ENCODE measurements at regions of chr4 and their contacts with region 1.

Region 1: DNA sequence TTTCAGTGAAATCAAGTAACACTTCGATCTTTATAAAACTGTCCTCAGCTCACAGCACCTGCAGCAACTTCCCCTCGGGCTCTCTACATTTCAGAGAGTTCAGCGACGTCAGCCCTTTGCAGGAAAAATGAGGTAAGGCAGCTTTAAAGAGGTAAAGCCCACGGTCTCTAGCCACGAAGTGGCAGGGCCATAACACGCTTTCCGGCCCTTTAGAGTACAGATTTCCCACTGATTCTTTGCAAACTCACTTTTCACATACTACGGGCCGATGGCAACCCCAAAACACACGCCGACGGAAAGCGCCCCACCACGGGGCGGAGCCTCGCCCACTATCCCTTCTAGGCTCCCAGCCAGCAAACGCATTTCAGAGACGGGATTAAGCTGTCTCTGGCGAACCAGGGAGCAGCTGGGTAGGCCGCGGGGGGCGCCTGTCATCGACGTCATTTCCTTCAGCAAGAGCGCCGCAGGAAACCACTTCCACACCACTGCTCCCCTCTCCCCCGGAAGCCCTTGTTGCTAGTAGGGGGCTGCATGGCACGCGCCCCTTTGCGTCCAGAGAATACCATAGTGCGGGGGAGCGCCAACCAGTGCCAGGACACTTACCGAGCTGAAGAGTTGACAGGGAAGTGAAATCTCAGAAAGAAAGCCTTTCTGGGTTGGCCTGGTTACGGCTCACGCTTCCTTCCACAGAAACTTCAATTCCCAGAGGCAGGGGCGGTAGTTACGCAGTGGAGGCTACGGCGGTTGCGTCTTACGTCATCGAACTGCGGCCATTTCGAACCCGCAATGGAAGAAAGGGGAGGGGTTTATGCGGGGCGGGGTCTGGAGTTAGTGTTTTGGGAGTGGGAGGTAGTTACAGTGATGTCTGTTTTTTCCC is at the start of gene TRMT10A:
- DNase-seq: peak; percentile 92
- H3K4me3 Mint-ChIP-seq: peak within 1 kb of the TSS; percentile 95
- H3K27ac Mint-ChIP-seq: peak within 1 kb of the TSS; percentile 98
- H3K4me1 Mint-ChIP-seq: no peaks in the 10 kb centered on the region
- H3K27me3 Mint-ChIP-seq: no peaks in the 10 kb centered on the region
- CTCF ChIP-seq: no peak
- total RNA-seq, gene TRMT10A: 2.6 and 2.9 TPM in 2 replicates

Region 2: GRCh38 chr4:98682719-98683118 is 880.8 kb before region 1 on chr4:
- CTCF ChIA-PET with region 1: no interaction called
- intact Hi-C with region 1: no loop called
- DNase-seq: no peak
- H3K4me3 Mint-ChIP-seq: no peak overlapping the region
- H3K27ac Mint-ChIP-seq: no peak overlapping the region
- H3K4me1 Mint-ChIP-seq: no peaks in the 10 kb centered on the region
- H3K27me3 Mint-ChIP-seq: no peaks in the 10 kb centered on the region
- CTCF ChIP-seq: no peak

Region 3: DNA sequence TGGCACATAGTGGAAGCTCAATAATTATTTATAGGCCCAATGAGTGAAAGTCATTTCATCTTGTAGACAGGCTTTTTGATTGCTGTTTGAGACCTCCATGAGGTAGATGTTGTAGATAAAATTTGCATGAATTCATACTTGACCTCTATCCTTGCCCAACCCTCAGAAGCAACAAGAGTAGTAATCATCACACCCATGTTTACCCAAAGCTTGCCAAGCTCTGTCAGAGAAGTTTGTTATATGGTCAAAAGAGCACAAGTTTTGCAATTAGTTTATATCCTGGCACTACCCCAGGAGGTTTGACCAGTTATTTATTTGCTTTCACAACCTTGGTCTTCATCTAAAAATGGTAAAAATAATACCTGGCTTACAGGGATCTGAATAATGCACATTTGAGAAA is 149.2 kb before region 1 on chr4:
- CTCF ChIA-PET with region 1: no interaction called
- intact Hi-C with region 1: no loop called
- DNase-seq: no peak
- H3K4me3 Mint-ChIP-seq: no peak overlapping the region
- H3K27ac Mint-ChIP-seq: no peak overlapping the region
- H3K4me1 Mint-ChIP-seq: peaks cover 19% of the 10 kb centered on the region
- H3K27me3 Mint-ChIP-seq: no peaks in the 10 kb centered on the region
- CTCF ChIP-seq: no peak

Region 4: DNA sequence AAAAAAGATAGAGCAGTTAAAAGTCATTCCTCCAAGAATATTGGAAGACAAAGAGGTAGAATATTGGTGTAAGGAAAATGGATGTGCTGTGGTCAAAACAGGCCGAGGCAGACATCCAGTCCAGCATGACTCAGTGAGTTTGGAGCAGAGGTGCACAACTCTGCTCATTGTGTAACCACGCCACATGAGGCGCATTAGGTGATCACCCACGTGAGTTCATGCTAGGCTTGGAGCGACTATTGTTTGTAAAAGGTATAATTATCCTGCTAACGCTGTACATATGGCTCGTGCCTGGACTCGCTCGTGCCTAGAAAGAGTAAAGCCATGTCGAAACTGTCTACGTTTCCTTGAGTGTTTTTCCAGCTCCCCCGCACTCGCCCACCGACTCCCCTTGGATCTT is 70.2 kb after region 1 on chr4:
- CTCF ChIA-PET with region 1: interaction called, 3 read pairs
- intact Hi-C with region 1: loop called (anchors 5 kb)
- DNase-seq: no peak
- H3K4me3 Mint-ChIP-seq: no peak overlapping the region
- H3K27ac Mint-ChIP-seq: no peak overlapping the region
- H3K4me1 Mint-ChIP-seq: peaks cover 51% of the 10 kb centered on the region
- H3K27me3 Mint-ChIP-seq: no peaks in the 10 kb centered on the region
- CTCF ChIP-seq: no peak

Region 5: GRCh38 chr4:99687120-99687519 is 123.6 kb after region 1 on chr4:
- CTCF ChIA-PET with region 1: no interaction called
- intact Hi-C with region 1: no loop called
- DNase-seq: no peak
- H3K4me3 Mint-ChIP-seq: no peak overlapping the region
- H3K27ac Mint-ChIP-seq: no peak overlapping the region
- H3K4me1 Mint-ChIP-seq: no peaks in the 10 kb centered on the region
- H3K27me3 Mint-ChIP-seq: no peaks in the 10 kb centered on the region
- CTCF ChIP-seq: no peak

Region 6: DNA sequence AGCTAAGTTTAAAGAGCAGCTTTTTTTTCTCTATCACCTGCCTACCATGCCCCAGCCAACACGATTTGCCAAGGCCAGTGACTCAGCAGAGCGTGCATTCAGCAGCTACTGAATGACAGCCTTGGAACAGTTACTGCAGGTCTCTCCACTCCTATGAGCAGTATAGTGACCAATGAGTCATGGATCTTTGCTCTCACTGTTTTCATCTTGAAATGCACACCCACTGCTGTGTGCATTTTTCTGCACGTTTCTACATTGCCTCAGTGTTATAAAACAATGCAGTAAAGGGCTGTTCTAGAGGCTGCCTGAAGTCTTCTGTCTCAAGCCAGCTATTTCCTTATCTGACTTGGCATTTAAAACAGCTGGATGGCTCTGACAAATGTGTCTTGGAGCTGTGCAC is 160.1 kb after region 1 on chr4:
- CTCF ChIA-PET with region 1: interaction called, 3 read pairs
- intact Hi-C with region 1: loop called (anchors 2 kb)
- DNase-seq: peak; percentile 31
- H3K4me3 Mint-ChIP-seq: no peak overlapping the region
- H3K27ac Mint-ChIP-seq: no peak overlapping the region
- H3K4me1 Mint-ChIP-seq: peaks cover 10% of the 10 kb centered on the region
- H3K27me3 Mint-ChIP-seq: no peaks in the 10 kb centered on the region
- CTCF ChIP-seq: no peak

Region 7: DNA sequence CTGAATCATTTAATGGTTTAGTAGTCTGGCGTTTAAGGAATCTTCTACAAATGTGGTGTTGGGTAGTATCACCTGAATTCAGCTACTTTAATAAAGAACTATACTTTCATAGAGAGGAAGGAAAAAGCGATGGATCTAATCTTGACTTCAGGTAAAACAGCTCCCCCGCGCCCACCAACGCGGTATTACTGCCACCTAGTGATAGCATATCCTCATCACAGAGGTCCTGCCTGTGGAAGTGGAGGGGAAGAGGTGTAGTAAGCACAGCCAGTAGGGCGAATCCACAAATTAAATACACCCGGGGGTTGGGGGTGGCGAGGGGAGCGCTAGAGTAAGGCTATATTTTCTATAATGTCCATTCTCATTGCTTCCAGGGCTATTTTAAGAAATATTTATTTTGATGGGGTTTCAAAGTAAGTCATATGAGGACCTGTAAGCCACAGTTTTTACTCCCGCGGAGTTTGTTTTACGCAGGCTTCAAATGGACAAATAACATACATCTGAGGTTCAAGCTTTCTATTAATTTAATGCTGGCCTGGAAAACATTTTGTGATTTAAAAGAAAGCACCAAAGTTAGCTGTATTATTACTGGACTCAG is 244.8 kb after region 1 on chr4:
- CTCF ChIA-PET with region 1: interaction called, 10 read pairs
- intact Hi-C with region 1: loop called (anchors 1 kb)
- DNase-seq: peak; percentile 70
- H3K4me3 Mint-ChIP-seq: no peak overlapping the region
- H3K27ac Mint-ChIP-seq: no peak overlapping the region
- H3K4me1 Mint-ChIP-seq: no peaks in the 10 kb centered on the region
- H3K27me3 Mint-ChIP-seq: no peaks in the 10 kb centered on the region
- CTCF ChIP-seq: peak; percentile 68

Region 8: GRCh38 chr4:99885063-99885664 is 321.6 kb after region 1 on chr4:
- CTCF ChIA-PET with region 1: no interaction called
- intact Hi-C with region 1: loop called (anchors 5 kb)
- DNase-seq: peak; percentile 11
- H3K4me3 Mint-ChIP-seq: no peak overlapping the region
- H3K27ac Mint-ChIP-seq: no peak overlapping the region
- H3K4me1 Mint-ChIP-seq: no peaks in the 10 kb centered on the region
- H3K27me3 Mint-ChIP-seq: no peaks in the 10 kb centered on the region
- CTCF ChIP-seq: no peak